ENCODE measurements at regions of chr4 and their contacts with region 1.

Region 1: DNA sequence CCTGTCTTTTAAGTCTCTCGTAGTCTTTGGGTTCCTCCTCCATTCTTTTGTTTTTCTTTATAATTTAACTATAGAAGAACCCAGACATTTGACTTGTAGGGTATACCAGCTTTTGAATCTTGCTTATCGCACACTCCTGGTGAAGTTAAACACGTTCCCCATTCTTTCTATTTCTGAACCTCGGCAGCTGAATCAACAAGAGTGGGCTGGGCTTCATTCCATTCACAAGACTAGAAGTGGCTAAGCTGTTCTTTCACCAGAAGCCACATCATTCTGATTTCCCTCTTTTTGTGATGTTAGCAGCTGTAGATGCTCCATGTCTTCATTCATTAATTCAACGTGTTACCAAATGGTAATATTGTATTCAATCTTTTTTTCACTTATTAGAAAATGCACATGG is 167.9 kb downstream of the CORIN start:
- DNase-seq: no peak
- H3K4me3 ChIP-seq: no peak overlapping the region
- H3K27ac ChIP-seq: no peak overlapping the region
- H3K4me1 ChIP-seq: no peaks in the 10 kb centered on the region
- H3K27me3 ChIP-seq: no peaks in the 10 kb centered on the region
- CTCF ChIP-seq: no peak
- POLR2A ChIP-seq: no peak

Region 2: GRCh38 chr4:47814618-47815295 is 144.8 kb after region 1 on chr4:
- intact Hi-C with region 1: no loop called
- DNase-seq: no peak
- H3K4me3 ChIP-seq: no peak overlapping the region
- H3K27ac ChIP-seq: no peak overlapping the region
- H3K4me1 ChIP-seq: no peaks in the 10 kb centered on the region
- H3K27me3 ChIP-seq: no peaks in the 10 kb centered on the region
- CTCF ChIP-seq: no peak
- POLR2A ChIP-seq: no peak

Region 3: GRCh38 chr4:47836641-47837093 is 166.7 kb after region 1 on chr4:
- intact Hi-C with region 1: loop called (anchors 10 kb)
- DNase-seq: peak; percentile 79 to 84
- H3K4me3 ChIP-seq: peak overlapping the region; percentile 3 to 64 (median 38)
- H3K27ac ChIP-seq: no peak overlapping the region
- H3K4me1 ChIP-seq: peaks cover 22 to 26% of the 10 kb centered on the region in 2 donors
- H3K27me3 ChIP-seq: no peaks in the 10 kb centered on the region
- CTCF ChIP-seq: peak in 5 of 6 experiments; percentile 27 to 73 (median 58)
- POLR2A ChIP-seq: no peak